ENCODE measurements at regions of chr2 and their contacts with region 1.

Region 1: GRCh38 chr2:178450774-178451525 is at the starts of genes PJVK and PRKRA:
- DNase-seq: peak; percentile 99
- H3K4me3 ChIP-seq: peak within 1 kb of the TSS; percentile 65 to 94 (median 75)
- H3K27ac ChIP-seq: peak within 1 kb of the TSS; percentile 94
- H3K4me1 ChIP-seq: peaks cover 15% of the 10 kb centered on the region
- H3K27me3 ChIP-seq: no peaks in the 10 kb centered on the region
- CTCF ChIP-seq: no peak
- POLR2A ChIP-seq: peak; percentile 96
- total RNA-seq, gene PJVK: 1.4 and 1.8 TPM in 2 replicates
- total RNA-seq, gene PRKRA: 42.4 and 46.6 TPM in 2 replicates

Region 2: DNA sequence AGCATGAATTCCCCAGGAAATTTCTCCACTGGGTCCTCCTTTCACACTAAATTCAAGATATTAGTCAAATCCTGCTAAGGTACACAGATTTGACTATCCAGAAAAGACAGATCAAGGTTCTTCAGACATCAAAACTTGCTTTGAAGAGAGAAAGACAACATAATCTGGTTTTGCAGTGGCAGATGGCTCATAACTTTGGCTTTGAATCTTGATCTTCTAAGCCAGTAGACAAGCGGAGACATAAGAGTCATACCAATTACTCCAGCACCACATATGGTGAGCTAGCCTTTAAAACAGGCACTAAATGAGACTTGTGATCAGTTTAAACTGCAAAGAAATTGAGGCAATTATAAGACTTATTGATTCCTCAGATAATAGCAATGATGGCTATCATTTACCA is 407.7 kb before region 1 on chr2:
- CTCF ChIA-PET with region 1: no interaction called
- POLR2A ChIA-PET with region 1: no interaction called
- dilution Hi-C with region 1: no loop called
- intact Hi-C with region 1: no loop called
- DNase-seq: no peak
- H3K4me3 ChIP-seq: no peak overlapping the region
- H3K27ac ChIP-seq: no peak overlapping the region
- H3K4me1 ChIP-seq: no peaks in the 10 kb centered on the region
- H3K27me3 ChIP-seq: peaks cover 0 to 2% of the 10 kb centered on the region in 2 experiments
- CTCF ChIP-seq: no peak
- POLR2A ChIP-seq: no peak

Region 3: DNA sequence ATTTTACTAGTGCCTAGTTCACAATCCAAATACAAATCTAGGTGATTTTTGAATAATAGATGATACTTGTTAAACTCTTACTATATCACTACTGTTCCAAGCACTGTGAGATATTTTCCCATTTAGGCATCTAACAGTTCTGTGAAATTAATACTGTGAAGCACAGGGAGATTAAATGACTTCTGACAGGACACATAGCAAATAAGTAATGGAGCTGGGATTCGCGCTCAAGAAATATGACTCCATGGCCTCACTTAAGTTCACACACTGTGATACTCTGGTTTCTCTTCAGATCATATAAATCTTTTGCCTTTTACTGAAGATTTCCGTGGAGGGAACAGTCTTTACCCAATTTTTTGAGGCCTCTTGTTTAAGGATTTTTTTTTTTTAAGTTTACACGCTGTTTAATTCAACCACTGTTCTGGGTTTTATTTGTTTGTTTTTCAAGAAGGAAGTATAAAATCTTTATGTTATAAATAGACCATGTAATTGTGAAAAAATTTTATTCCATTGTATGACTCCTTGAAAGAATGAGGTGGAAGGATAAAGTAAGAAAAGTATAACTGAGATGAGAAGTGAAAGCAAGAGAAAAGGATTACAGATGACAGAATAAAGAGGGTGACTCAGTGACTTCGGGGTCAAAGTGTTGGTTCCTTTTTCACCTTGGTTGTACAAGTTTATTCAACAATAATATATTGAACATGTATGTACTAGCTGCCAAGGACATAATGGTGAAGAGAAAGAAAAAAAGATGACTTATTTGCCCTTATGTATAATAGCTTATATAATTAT is 308.5 kb before region 1 on chr2:
- CTCF ChIA-PET with region 1: no interaction called
- POLR2A ChIA-PET with region 1: no interaction called
- dilution Hi-C with region 1: loop called (anchors 25 kb)
- intact Hi-C with region 1: no loop called
- DNase-seq: no peak
- H3K4me3 ChIP-seq: no peak overlapping the region
- H3K27ac ChIP-seq: no peak overlapping the region
- H3K4me1 ChIP-seq: no peaks in the 10 kb centered on the region
- H3K27me3 ChIP-seq: no peaks in the 10 kb centered on the region
- CTCF ChIP-seq: no peak
- POLR2A ChIP-seq: no peak

Region 4: GRCh38 chr2:178193823-178194599 is 256.9 kb before region 1 on chr2 and contains the start of gene OSBPL6:
- CTCF ChIA-PET with region 1: no interaction called
- POLR2A ChIA-PET with region 1: no interaction called
- dilution Hi-C with region 1: no loop called
- intact Hi-C with region 1: loop called (anchors 1 kb)
- DNase-seq: peak; percentile 88
- H3K4me3 ChIP-seq: peak within 1 kb of the TSS; percentile 48 to 79 (median 73)
- H3K27ac ChIP-seq: no peak within 1 kb of the TSS
- H3K4me1 ChIP-seq: peaks cover 8% of the 10 kb centered on the region
- H3K27me3 ChIP-seq: peaks cover 11% of the 10 kb centered on the region in 2 experiments
- CTCF ChIP-seq: peak in 1 of 2 donors; percentile 22
- POLR2A ChIP-seq: peak; percentile 51
- total RNA-seq, gene OSBPL6: 2.3 TPM in 2 replicates

Region 5: GRCh38 chr2:178498137-178498536 is 47.2 kb after region 1 on chr2:
- CTCF ChIA-PET with region 1: no interaction called
- POLR2A ChIA-PET with region 1: no interaction called
- dilution Hi-C with region 1: no loop called
- intact Hi-C with region 1: no loop called
- DNase-seq: no peak
- H3K4me3 ChIP-seq: no peak overlapping the region
- H3K27ac ChIP-seq: no peak overlapping the region
- H3K4me1 ChIP-seq: no peaks in the 10 kb centered on the region
- H3K27me3 ChIP-seq: no peaks in the 10 kb centered on the region
- CTCF ChIP-seq: no peak
- POLR2A ChIP-seq: no peak

Region 6: GRCh38 chr2:178522950-178523595 is 72.1 kb after region 1 on chr2:
- CTCF ChIA-PET with region 1: no interaction called
- POLR2A ChIA-PET with region 1: no interaction called
- dilution Hi-C with region 1: no loop called
- intact Hi-C with region 1: loop called (anchors 2 kb)
- DNase-seq: peak; percentile 83
- H3K4me3 ChIP-seq: peak overlapping the region; percentile 17 to 77 (median 39)
- H3K27ac ChIP-seq: peak overlapping the region; percentile 36
- H3K4me1 ChIP-seq: peaks cover 4% of the 10 kb centered on the region
- H3K27me3 ChIP-seq: no peaks in the 10 kb centered on the region
- CTCF ChIP-seq: peak; percentile 79 to 85
- POLR2A ChIP-seq: peak; percentile 73

Measured in endothelial cell of umbilical vein (primary cell).